ENCODE measurements at regions of chr11 and their contacts with region 1.

Region 1: GRCh38 chr11:76860539-76861475 is at the start of gene ACER3:
- DNase-seq: peak; percentile 90
- ATAC-seq: peak; percentile 99
- H3K4me3 ChIP-seq: peak within 1 kb of the TSS; percentile 32 to 81 (median 80)
- H3K4me3 Mint-ChIP-seq: peak within 1 kb of the TSS; percentile 92
- H3K27ac ChIP-seq: peak within 1 kb of the TSS; percentile 69 to 87
- H3K27ac Mint-ChIP-seq: peak within 1 kb of the TSS; percentile 81
- H3K4me1 ChIP-seq: peaks cover 19 to 22% of the 10 kb centered on the region in 2 donors
- H3K4me1 Mint-ChIP-seq: peaks cover 28% of the 10 kb centered on the region
- H3K27me3 ChIP-seq: no peaks in the 10 kb centered on the region
- H3K27me3 Mint-ChIP-seq: no peaks in the 10 kb centered on the region
- CTCF ChIP-seq: no peak
- total RNA-seq, gene ACER3: 11.3 and 12.9 TPM in 2 replicates

Region 2: DNA sequence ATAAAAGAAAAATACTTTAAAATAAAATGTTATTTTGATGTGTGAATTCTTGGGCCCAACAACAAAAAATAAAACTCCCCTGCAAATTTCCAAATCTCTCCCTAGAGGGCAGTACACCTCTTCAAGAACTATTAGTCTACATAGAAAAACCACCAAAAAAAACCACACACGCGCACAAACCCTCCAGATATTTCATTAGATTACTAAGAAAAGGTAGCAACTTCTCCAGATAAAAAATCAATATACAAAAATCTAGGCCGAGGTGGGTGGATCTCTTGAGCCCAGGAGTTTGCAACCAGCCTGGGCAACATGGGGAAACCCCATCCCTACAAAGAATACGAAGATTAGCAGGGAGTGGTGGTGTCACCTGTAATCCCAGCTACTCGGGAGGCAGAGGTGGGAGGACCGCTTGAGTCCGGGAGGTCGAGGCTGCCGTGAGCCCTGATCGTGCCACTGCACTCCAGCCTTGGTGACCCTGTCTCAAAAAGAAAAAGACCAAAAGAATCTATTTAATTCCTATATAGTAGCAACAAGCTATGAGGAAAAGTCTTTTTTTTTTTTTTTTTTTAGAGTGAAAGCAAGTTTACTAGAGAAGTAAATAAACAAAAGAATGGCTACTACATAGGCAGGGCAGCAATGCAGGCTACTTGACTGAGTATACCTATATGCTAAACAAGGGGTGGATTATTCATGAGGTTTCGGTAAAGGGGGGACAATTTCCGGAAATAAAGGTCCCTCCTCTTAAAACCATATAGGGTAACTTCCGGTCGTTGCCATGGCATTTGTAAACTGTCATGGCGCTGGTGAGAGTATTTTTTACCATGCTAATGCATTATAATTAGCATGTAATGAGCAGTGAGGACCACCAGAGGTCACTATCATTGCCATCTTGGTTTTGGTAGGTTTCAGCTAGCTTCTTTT is 186.5 kb after region 1 on chr11:
- CTCF ChIA-PET with region 1: no interaction called
- POLR2A ChIA-PET with region 1: interaction called, 3 read pairs
- intact Hi-C with region 1: loop called (anchors 1 kb)
- DNase-seq: peak; percentile 95
- ATAC-seq: peak; percentile 86
- H3K4me3 ChIP-seq: peak overlapping the region in 4 of 5 experiments; percentile 20 to 70 (median 46)
- H3K4me3 Mint-ChIP-seq: peak overlapping the region; percentile 67
- H3K27ac ChIP-seq: no peak overlapping the region
- H3K27ac Mint-ChIP-seq: peak overlapping the region; percentile 53
- H3K4me1 ChIP-seq: peaks cover 14 to 15% of the 10 kb centered on the region in 2 donors
- H3K4me1 Mint-ChIP-seq: peaks cover 13% of the 10 kb centered on the region
- H3K27me3 ChIP-seq: peaks cover 0 to 29% (median 17%) of the 10 kb centered on the region in 4 experiments
- H3K27me3 Mint-ChIP-seq: peaks cover 35% of the 10 kb centered on the region
- CTCF ChIP-seq: peak; percentile 67